Left ventricle myocardium inferior (tissue), 1 donor: ENCODE measurements at regions of chr11 and their contacts with region 1.

Region 1: DNA sequence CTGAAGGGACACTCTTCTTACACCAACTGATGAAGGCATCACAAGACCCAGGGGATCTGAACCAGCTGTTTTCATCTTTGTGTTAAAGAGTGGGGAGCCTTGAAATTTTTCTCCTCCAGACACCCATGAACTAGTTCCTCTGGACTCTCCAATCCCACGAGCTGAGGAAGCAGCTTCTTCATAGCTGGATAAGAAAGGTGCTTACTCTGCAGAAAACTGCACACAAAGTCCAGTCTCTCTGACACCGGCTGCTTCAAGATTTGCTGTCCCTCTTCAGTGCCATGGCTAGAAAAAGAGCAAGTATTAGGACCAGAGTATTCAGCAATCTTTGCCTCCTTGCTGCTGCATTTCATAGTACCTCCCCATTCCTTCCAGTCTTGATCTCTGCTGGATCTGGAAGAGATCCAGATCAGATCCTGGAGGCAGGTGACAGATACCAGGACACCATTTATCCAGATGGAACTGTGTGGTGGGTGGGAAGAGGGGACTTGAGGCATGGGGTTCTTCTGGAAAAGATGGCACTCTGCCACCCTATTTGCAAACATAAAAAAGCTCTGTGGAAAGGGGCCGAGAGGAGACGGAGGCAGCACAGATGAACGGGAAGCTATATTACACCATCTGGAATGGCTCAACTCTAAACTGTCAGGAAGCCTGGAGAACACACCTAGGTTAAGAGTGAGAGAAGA is 25.5 kb downstream of the IL18BP start:
- DNase-seq: no peak
- H3K4me3 ChIP-seq: no peak overlapping the region
- H3K27ac ChIP-seq: no peak overlapping the region
- H3K4me1 ChIP-seq: peaks cover 52% of the 10 kb centered on the region
- H3K27me3 ChIP-seq: no peaks in the 10 kb centered on the region
- CTCF ChIP-seq: no peak

Region 2: GRCh38 chr11:72091005-72091691 is 66.9 kb after region 1 on chr11:
- intact Hi-C with region 1: loop called (anchors 2 kb)
- DNase-seq: peak; percentile 57
- H3K4me3 ChIP-seq: no peak overlapping the region
- H3K27ac ChIP-seq: peak overlapping the region; percentile 56
- H3K4me1 ChIP-seq: peaks cover 13% of the 10 kb centered on the region
- H3K27me3 ChIP-seq: no peaks in the 10 kb centered on the region
- CTCF ChIP-seq: peak; percentile 91